Gastrocnemius medialis (tissue), 4 donors: ENCODE measurements at regions of chr11 and their contacts with region 1.

Region 1: DNA sequence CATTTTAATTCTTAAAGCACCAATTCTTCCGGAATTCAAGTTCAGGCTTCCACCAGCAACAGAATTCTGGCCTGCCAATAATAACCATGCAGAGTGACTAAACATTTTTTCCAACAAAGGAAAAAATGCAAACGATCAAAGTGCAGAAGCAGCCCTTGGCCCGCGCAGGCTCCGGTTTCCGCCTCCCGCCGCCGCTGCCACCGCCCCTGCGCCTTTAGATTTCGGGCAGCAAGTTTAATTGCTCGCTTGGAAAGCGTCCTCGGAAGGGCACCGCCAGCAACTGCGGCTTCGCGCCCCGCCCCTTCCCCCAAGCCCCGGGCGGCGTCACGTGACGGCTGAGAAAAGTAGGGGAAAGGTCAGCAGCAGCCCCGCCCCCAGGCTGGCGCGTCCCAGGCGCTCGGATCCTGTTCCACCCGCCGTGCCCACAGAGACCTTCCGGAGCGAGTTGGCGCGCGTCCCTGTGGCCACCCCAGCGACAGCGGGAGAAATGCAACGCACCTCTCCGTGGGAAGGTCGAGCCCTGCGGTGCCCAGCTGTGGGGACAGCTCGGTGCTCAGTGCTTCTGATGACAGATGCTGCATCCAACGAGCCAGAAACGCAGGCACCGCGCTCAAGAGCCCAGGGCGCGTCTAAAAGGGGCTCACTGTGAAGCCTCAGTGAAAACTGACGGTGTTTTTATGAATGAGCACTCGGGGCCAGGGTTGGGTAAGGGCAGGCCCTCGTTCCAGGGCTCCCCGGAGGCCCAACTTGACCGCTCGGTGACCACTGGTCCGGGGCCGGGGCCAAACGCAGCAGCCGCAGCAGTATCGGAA is 2.5 kb downstream of the CPT1A start:
- DNase-seq: peak; percentile 91 to 96
- ATAC-seq: peak; percentile 67 to 73
- H3K4me3 ChIP-seq: peak overlapping the region; percentile 77 to 86 (median 82)
- H3K27ac ChIP-seq: peak overlapping the region; percentile 88 to 95 (median 92)
- H3K4me1 ChIP-seq: peaks cover 53 to 64% of the 10 kb centered on the region in 2 donors
- H3K27me3 ChIP-seq: no peaks in the 10 kb centered on the region
- CTCF ChIP-seq: peak in 1 of 5 experiments; percentile 17
- POLR2A ChIP-seq: peak; percentile 22 to 37

Region 2: DNA sequence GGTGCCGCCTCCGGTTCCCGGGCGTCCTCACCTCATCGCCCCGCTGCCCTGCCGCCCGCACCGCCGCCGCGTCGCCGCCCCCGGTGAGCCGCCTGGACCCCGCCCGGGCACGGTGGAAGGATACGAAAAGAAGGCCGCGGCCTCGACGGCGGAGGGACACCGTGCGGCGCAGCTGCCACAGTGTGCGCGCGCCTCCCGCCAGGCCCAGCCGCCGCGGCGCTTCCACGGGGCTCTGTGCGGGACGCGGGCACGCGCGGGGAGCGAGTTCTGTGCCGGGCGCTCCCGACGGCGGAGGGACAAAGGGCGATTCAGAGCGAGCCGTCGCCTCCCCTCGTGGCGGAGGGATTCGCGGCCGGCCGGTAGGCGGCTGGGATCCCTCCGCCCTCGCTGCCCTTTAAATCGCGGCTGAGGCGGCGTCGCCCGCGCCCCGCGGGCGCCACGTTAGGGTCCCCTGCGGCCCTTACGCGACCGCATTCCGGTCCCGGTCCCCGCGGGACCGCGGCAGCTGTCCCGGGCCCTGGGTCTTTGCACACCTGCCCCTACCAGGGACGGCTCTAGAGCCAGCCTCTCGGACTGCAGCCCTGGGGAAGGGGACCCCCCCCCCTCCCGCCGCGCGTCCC is 625.6 kb before region 1 on chr11:
- in situ Hi-C with region 1: no loop called
- intact Hi-C with region 1: loop called (anchors 2 kb)
- DNase-seq: peak; percentile 81 to 87
- ATAC-seq: peak; percentile 33 to 37
- H3K4me3 ChIP-seq: peak overlapping the region; percentile 69 to 99 (median 91)
- H3K27ac ChIP-seq: peak overlapping the region; percentile 89 to 100 (median 96)
- H3K4me1 ChIP-seq: peaks cover 41 to 42% of the 10 kb centered on the region in 2 donors
- H3K27me3 ChIP-seq: no peaks in the 10 kb centered on the region
- CTCF ChIP-seq: peak in 4 of 5 experiments; percentile 12 to 68 (median 38)
- POLR2A ChIP-seq: peak; percentile 79 to 90

Region 3: DNA sequence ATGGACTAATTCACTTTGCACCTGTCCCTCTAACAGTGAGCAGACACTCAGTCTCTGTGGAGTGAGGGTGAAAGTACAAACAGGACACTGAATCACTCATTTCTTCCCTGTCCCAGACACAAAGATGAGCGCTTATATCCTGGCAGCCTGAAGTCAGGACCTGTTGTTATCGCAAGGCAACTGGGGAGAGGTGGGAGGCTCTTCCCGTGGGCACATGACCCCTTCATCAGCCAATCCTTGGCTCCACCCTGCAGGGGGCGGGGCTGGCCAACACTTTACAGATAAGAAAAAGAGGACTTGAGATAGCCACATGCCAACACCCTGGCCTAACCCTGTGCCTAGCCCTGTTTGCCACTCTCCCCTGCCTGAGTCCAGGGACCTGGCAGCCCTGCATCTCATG is 58.4 kb before region 1 on chr11:
- in situ Hi-C with region 1: no loop called
- intact Hi-C with region 1: no loop called
- DNase-seq: no peak
- ATAC-seq: no peak
- H3K4me3 ChIP-seq: no peak overlapping the region
- H3K27ac ChIP-seq: no peak overlapping the region
- H3K4me1 ChIP-seq: no peaks in the 10 kb centered on the region
- H3K27me3 ChIP-seq: no peaks in the 10 kb centered on the region
- CTCF ChIP-seq: no peak
- POLR2A ChIP-seq: no peak

Region 4: GRCh38 chr11:68810164-68810563 is 29.1 kb before region 1 on chr11:
- in situ Hi-C with region 1: no loop called
- intact Hi-C with region 1: loop called (anchors 2 kb)
- DNase-seq: peak; percentile 76 to 88
- ATAC-seq: peak; percentile 90 to 95
- H3K4me3 ChIP-seq: no peak overlapping the region
- H3K27ac ChIP-seq: peak overlapping the region; percentile 45 to 73 (median 66)
- H3K4me1 ChIP-seq: peaks cover 15 to 21% of the 10 kb centered on the region in 2 donors
- H3K27me3 ChIP-seq: no peaks in the 10 kb centered on the region
- CTCF ChIP-seq: no peak
- POLR2A ChIP-seq: no peak

Region 5: GRCh38 chr11:69443138-69443967 is 604.1 kb after region 1 on chr11:
- in situ Hi-C with region 1: no loop called
- intact Hi-C with region 1: loop called (anchors 10 kb)
- DNase-seq: peak; percentile 62 to 65
- ATAC-seq: peak; percentile 67 to 68
- H3K4me3 ChIP-seq: peak overlapping the region; percentile 34 to 54 (median 45)
- H3K27ac ChIP-seq: peak overlapping the region; percentile 49 to 73 (median 63)
- H3K4me1 ChIP-seq: peaks cover 21 to 24% of the 10 kb centered on the region in 2 donors
- H3K27me3 ChIP-seq: no peaks in the 10 kb centered on the region
- CTCF ChIP-seq: no peak
- POLR2A ChIP-seq: no peak